Posterior cingulate gyrus (tissue), 11 donors: ENCODE measurements at regions of chr9 and their contacts with region 1.

Region 1: GRCh38 chr9:33076358-33077004 is at the start of gene SMU1:
- DNase-seq: peak; percentile 93 to 100 (median 98)

Region 2: GRCh38 chr9:33024966-33025571 is 51.4 kb before region 1 on chr9 and contains the start of gene DNAJA1:
- intact Hi-C with region 1: loop called (anchors 10 kb)
- DNase-seq: peak; percentile 92 to 100 (median 95)

Region 3: GRCh38 chr9:33167046-33167808 is 90.7 kb after region 1 on chr9 and contains the start of gene B4GALT1:
- intact Hi-C with region 1: loop called (anchors 5 kb)
- DNase-seq: peak; percentile 69 to 96 (median 82)

Region 4: GRCh38 chr9:33404788-33405362 is 328.4 kb after region 1 on chr9:
- intact Hi-C with region 1: no loop called
- DNase-seq: no peak